ENCODE measurements at regions of chr12 and their contacts with region 1.

Region 1: DNA sequence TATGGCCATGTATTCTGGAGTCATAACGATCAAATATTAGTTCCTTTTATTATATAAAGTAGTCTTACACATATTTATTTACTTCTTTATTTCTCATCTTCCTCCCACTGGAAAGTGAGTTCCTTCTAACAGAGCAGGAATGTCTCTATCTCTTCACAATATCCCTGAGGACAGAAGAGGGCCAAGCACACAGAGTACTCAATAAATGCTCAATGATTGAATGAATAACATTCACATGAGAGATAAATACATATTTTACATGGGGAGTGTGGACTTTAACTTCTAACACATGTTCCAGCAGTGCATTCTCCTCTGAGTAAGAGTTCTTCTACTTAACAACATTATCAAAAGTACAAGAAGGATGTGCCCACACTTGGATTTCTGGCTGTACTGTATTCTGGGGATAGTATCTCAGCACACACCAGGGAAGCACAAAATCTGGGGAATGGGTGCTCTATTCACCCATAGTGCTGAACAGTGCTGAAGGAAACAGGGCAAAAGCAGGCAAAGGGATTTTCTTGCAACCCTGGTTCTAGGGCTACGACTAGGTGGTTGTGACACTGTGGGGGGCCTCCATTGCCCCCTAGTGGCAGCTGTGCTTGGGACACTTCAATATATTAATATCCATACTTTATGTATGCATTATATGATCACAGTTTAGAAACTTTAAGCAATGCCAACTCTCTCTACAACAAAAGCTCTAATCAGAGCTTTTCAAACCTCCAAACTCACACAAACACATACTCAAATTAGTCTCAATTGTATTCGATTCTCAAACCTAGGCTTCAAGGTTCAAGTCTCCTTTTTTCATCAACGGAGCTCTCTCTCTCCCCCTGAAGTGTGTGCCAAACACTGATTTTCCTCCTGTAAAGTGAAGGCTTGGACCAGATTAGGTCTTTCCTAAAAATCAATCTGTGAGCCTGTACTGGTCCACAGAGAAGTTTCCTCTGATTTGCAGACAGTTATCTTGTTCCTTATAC is 115.5 kb downstream of the SLC2A13 start:
- DNase-seq: peak; percentile 53
- ATAC-seq: peak; percentile 68

Region 2: GRCh38 chr12:39764944-39765560 is 225.4 kb before region 1 on chr12:
- intact Hi-C with region 1: loop called (anchors 5 kb)
- DNase-seq: no peak
- ATAC-seq: peak; percentile 48

Region 3: GRCh38 chr12:39919790-39920189 is 70.6 kb before region 1 on chr12:
- intact Hi-C with region 1: no loop called
- DNase-seq: no peak
- ATAC-seq: no peak